Activated CD8-positive, alpha-beta T cell treated with anti-CD3 and anti-CD28 coated beads for 36 hours (primary cell): ENCODE measurements at regions of chr10 and their contacts with region 1.

Region 1: GRCh38 chr10:97234400-97234799 is 48.6 kb upstream of the SLIT1 start:
- DNase-seq: no peak
- ATAC-seq: peak; percentile 53
- H3K4me3 Mint-ChIP-seq: no peak overlapping the region
- H3K27ac Mint-ChIP-seq: no peak overlapping the region
- H3K4me1 Mint-ChIP-seq: peaks cover 7% of the 10 kb centered on the region
- H3K27me3 Mint-ChIP-seq: no peaks in the 10 kb centered on the region
- CTCF ChIP-seq: peak; percentile 74

Region 2: GRCh38 chr10:97157578-97158095 is 76.8 kb before region 1 on chr10:
- CTCF ChIA-PET with region 1: no interaction called
- POLR2A ChIA-PET with region 1: no interaction called
- intact Hi-C with region 1: no loop called
- DNase-seq: no peak
- ATAC-seq: no peak
- H3K4me3 Mint-ChIP-seq: no peak overlapping the region
- H3K27ac Mint-ChIP-seq: no peak overlapping the region
- H3K4me1 Mint-ChIP-seq: no peaks in the 10 kb centered on the region
- H3K27me3 Mint-ChIP-seq: no peaks in the 10 kb centered on the region
- CTCF ChIP-seq: no peak

Region 3: DNA sequence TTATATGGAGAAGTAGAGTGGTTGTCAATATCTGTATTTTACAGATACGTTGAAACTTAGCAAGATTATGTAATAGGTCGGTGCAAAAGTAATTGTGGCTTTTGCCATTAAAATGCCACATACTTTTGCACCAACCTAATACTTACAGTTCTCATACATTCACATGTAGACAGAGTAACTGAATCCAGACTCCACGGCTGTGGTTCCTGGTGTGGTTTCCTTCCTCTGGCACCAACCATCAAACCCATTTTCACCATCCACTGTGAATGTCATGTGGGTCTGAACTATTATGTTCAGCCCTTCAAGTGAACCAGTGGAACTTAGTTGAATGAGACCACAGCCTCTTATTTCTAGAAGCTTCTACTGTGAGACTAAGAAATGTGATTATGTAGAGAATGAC is 17.1 kb before region 1 on chr10:
- CTCF ChIA-PET with region 1: interaction called, 64 read pairs
- POLR2A ChIA-PET with region 1: no interaction called
- intact Hi-C with region 1: no loop called
- DNase-seq: no peak
- ATAC-seq: no peak
- H3K4me3 Mint-ChIP-seq: no peak overlapping the region
- H3K27ac Mint-ChIP-seq: peak overlapping the region; percentile 94
- H3K4me1 Mint-ChIP-seq: peaks cover 29% of the 10 kb centered on the region
- H3K27me3 Mint-ChIP-seq: no peaks in the 10 kb centered on the region
- CTCF ChIP-seq: no peak

Region 4: DNA sequence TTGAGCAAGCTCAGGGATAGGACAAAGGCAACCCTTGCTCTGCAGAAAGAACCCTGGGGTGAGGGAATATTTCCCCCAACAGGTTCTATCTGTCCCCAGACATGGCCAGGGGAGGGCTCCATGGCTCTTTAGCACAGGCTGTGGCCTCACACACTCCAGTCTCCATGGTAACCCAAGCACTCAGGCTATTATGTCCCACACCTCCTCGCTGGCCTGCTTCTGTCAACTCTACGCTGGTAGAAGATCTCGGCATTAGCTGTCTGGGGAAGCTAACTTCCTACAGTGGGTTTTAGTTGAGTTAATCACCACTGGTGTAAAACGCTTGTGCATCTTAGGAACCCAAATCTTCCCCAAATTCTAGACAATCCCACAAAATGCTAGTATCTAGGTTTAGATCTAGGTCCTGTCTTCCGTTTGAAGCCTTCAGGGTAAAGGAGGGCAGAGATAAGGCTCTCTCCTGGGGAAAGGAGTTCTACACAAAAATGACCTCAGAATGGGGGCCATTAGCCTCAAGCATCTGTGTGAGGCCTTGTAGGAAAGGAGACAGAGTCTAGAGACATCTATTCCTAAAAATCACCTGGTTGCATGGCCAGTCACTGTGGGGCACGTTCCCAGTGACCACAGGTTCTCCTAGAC is 12.0 kb before region 1 on chr10:
- CTCF ChIA-PET with region 1: interaction called, 28 read pairs
- POLR2A ChIA-PET with region 1: interaction called, 3 read pairs
- intact Hi-C with region 1: no loop called
- DNase-seq: no peak
- ATAC-seq: no peak
- H3K4me3 Mint-ChIP-seq: no peak overlapping the region
- H3K27ac Mint-ChIP-seq: no peak overlapping the region
- H3K4me1 Mint-ChIP-seq: peaks cover 24% of the 10 kb centered on the region
- H3K27me3 Mint-ChIP-seq: no peaks in the 10 kb centered on the region
- CTCF ChIP-seq: no peak

Region 5: DNA sequence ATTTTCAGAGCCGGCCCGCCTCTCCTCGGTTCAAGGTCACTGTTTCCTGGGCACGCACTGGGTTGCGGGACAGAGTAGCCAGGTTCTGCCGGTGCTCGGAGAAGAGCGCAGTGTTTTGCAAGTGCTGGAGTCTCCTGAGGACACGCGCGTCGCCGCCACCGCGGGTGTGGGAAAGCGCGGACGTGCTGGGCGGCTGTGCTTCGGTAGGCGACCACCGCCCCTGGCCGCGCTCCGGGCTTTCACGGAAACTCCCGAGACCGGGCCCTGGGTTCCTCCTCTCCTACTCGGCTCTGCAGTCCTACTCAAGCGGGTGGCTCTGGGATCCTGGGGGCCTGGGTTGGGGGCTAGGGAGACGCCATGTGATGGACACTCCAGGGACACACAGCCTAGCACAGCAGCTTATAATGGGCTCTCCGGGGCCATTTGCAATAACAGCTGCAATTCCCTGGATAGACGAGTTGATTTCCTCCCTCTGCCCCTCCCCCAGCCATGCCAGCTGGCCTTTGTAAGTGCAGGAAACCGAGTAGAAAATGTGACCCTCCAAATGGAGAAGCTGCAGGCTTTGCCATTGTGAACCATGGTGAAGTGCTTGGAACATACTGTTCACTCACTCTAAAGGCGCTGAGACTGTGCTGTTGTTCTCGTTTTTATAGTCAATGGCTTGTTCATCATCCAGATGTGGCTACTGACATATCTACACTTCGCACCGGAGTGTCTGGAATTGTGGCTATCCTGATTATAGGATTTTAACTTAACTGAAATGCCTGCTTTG is 86.8 kb after region 1 on chr10:
- CTCF ChIA-PET with region 1: no interaction called
- POLR2A ChIA-PET with region 1: no interaction called
- intact Hi-C with region 1: no loop called
- DNase-seq: peak; percentile 28
- ATAC-seq: no peak
- H3K4me3 Mint-ChIP-seq: peak overlapping the region; percentile 83
- H3K27ac Mint-ChIP-seq: peak overlapping the region; percentile 82
- H3K4me1 Mint-ChIP-seq: peaks cover 21% of the 10 kb centered on the region
- H3K27me3 Mint-ChIP-seq: peaks cover 2% of the 10 kb centered on the region
- CTCF ChIP-seq: no peak

Region 6: GRCh38 chr10:97400665-97401454 is 166.5 kb after region 1 on chr10 and contains the start of gene RRP12:
- CTCF ChIA-PET with region 1: no interaction called
- POLR2A ChIA-PET with region 1: no interaction called
- intact Hi-C with region 1: no loop called
- DNase-seq: peak; percentile 93
- ATAC-seq: peak; percentile 98
- H3K4me3 Mint-ChIP-seq: peak within 1 kb of the TSS; percentile 89
- H3K27ac Mint-ChIP-seq: peak within 1 kb of the TSS; percentile 79
- H3K4me1 Mint-ChIP-seq: peaks cover 5% of the 10 kb centered on the region
- H3K27me3 Mint-ChIP-seq: no peaks in the 10 kb centered on the region
- CTCF ChIP-seq: no peak
- total RNA-seq, gene RRP12: 50.3 to 51.0 TPM